Calu3 (cell line): ENCODE measurements at regions of chr12 and their contacts with region 1.

Region 1: GRCh38 chr12:82461851-82462250 is 103.5 kb downstream of the METTL25 start:
- DNase-seq: no peak
- H3K4me3 Mint-ChIP-seq: no peak overlapping the region
- H3K27ac Mint-ChIP-seq: no peak overlapping the region
- H3K4me1 Mint-ChIP-seq: peaks cover 27% of the 10 kb centered on the region
- H3K27me3 Mint-ChIP-seq: no peaks in the 10 kb centered on the region
- CTCF ChIP-seq: no peak

Region 2: DNA sequence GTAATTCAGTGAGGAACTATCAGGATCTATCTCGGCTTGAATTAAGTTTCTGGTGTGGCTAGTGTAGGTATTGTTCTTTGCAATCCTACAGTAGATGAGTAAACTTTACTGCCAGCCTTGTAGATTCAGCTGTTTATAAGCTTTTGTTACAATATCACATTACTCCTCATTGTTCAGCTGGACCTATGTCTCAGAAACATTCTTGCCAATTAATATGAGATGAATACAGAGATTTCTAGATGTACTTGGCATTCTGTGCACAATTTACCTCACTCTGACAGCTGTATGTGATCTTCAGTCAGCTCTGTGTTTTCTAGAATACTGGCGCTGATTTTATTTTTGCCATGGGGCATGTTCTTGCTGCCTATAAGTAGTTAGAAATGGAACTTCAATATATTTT is 47.8 kb before region 1 on chr12:
- CTCF ChIA-PET with region 1: no interaction called
- intact Hi-C with region 1: loop called (anchors 5 kb)
- DNase-seq: no peak
- H3K4me3 Mint-ChIP-seq: no peak overlapping the region
- H3K27ac Mint-ChIP-seq: no peak overlapping the region
- H3K4me1 Mint-ChIP-seq: peaks cover 35% of the 10 kb centered on the region
- H3K27me3 Mint-ChIP-seq: no peaks in the 10 kb centered on the region
- CTCF ChIP-seq: no peak

Region 3: DNA sequence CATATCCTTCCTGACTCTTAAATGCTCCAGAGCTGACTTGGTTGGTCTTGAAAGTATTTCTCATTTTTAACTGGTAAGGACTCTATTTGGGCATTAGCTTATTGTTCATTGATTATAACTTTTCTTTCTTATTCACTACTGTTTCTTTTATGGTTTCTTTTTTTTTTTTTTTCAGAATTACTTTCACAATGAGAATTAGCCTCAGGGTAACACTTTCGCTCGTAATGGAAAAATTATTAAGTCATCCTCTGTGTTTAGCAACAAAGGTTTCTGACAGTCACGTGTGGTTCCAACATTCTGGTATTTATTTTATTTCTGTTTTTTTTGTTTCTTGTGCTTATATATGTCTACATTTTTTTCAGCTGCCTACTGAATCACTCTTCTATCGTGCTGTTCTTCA is 23.5 kb before region 1 on chr12:
- CTCF ChIA-PET with region 1: no interaction called
- intact Hi-C with region 1: no loop called
- DNase-seq: no peak
- H3K4me3 Mint-ChIP-seq: no peak overlapping the region
- H3K27ac Mint-ChIP-seq: no peak overlapping the region
- H3K4me1 Mint-ChIP-seq: no peaks in the 10 kb centered on the region
- H3K27me3 Mint-ChIP-seq: no peaks in the 10 kb centered on the region
- CTCF ChIP-seq: no peak

Region 4: DNA sequence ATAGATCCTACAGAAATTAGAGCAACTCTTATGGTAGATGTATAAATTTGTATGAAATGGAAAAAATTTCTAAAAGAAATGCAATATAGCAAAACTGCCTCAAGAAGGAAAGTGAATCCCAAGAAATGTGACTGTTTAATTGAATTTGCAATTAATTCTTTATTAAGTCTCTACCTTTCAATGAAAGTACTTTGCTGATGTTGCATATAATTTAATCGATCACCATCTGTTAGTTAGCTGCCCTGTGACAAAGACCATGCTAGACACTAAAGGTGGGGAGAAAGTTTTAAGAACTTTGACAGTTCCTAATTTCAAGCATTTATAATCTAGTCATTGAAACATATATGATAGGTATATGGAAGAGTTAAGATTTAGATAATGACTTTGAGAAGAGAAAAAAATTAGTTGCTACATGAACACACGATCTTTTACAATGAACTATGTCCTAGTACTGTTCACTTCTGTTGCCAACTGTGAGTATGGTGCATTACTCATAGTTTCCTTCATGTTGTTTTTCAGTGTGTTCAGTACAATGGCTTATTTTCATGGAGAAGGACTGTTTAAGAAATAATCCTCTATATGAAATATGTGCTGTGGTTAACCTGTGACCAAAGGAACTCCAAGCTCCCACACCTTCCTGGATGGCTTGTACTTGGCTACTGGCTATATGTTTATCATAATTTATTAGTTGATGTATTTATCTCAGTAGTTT is 24.8 kb after region 1 on chr12:
- CTCF ChIA-PET with region 1: no interaction called
- intact Hi-C with region 1: loop called (anchors 2 kb)
- DNase-seq: no peak
- H3K4me3 Mint-ChIP-seq: no peak overlapping the region
- H3K27ac Mint-ChIP-seq: peak overlapping the region; percentile 48
- H3K4me1 Mint-ChIP-seq: no peaks in the 10 kb centered on the region
- H3K27me3 Mint-ChIP-seq: no peaks in the 10 kb centered on the region
- CTCF ChIP-seq: no peak

Region 5: GRCh38 chr12:82619644-82620043 is 157.8 kb after region 1 on chr12:
- CTCF ChIA-PET with region 1: no interaction called
- intact Hi-C with region 1: no loop called
- DNase-seq: no peak
- H3K4me3 Mint-ChIP-seq: no peak overlapping the region
- H3K27ac Mint-ChIP-seq: no peak overlapping the region
- H3K4me1 Mint-ChIP-seq: no peaks in the 10 kb centered on the region
- H3K27me3 Mint-ChIP-seq: no peaks in the 10 kb centered on the region
- CTCF ChIP-seq: no peak

Region 6: DNA sequence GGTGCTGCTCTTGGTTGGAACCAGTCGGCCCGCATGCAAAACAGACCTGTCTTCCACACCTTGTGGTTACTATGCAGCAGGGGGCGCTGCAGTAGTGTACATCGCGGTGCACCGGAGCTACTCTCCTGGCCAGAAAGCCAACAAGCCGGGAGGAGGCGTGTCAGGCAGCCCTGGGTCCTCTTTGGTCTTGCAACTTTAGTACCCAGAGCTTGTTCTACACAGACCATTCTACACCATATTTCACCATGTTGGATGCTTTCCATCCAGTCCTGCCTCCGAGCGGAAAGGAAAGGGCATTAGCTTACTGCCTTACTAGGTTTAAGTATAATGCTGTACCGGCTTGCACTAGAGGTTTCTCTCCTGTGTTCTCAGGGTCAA is 223.9 kb after region 1 on chr12:
- CTCF ChIA-PET with region 1: no interaction called
- intact Hi-C with region 1: no loop called
- DNase-seq: peak; percentile 97
- H3K4me3 Mint-ChIP-seq: peak overlapping the region; percentile 89
- H3K27ac Mint-ChIP-seq: peak overlapping the region; percentile 97
- H3K4me1 Mint-ChIP-seq: peaks cover 51% of the 10 kb centered on the region
- H3K27me3 Mint-ChIP-seq: no peaks in the 10 kb centered on the region
- CTCF ChIP-seq: peak; percentile 82